Activated naive CD8-positive, alpha-beta T cell treated with anti-CD3 and anti-CD28 coated beads, Interleukin-2, amount 10 ng/mL, durations not matched to agents 7 days and 5 days (primary cell): ENCODE measurements at regions of chr1 and their contacts with region 1.

Region 1: GRCh38 chr1:226332947-226333346 is 24.0 kb upstream of the LIN9 start:
- DNase-seq: no peak
- ATAC-seq: no peak
- H3K4me3 Mint-ChIP-seq: peak overlapping the region; percentile 54
- H3K27ac Mint-ChIP-seq: peak overlapping the region; percentile 56
- H3K4me1 Mint-ChIP-seq: peaks cover 8% of the 10 kb centered on the region
- H3K27me3 Mint-ChIP-seq: peaks cover 4% of the 10 kb centered on the region

Region 2: DNA sequence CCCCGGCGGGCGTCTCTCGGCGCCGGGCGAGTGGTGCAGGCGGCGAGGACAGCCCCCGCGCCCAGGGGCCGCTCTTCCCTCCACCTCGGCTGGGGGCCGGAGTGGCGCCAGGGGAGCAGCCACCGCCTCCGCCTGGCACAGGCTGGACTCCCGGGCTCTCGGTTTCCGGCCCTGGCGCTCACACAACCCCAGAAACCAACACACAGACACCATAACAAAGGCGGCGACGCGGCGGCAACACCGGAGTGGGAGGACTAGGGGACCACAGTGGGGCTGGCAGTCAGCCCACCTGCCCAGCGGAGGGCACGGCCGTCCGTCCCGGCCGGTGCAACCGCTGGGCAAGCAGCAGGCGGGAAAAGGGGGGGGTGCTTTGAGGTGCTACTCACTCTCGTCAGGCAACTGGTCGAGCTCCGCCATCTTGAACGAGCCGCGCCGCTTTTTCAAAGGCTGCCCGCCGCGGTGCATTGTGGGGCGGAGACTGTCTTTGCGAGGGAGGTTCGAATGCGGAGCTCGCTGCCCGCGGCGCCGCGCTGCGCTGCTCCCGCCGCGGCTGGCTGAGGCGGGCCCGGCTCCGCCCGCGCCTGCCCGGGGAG is 24.1 kb before region 1 on chr1 and contains the start of gene LIN9:
- POLR2A ChIA-PET with region 1: interaction called, 11 read pairs
- DNase-seq: peak; percentile 96
- ATAC-seq: peak; percentile 87
- H3K4me3 Mint-ChIP-seq: peak within 1 kb of the TSS; percentile 90
- H3K27ac Mint-ChIP-seq: peak within 1 kb of the TSS; percentile 92
- H3K4me1 Mint-ChIP-seq: peaks cover 21% of the 10 kb centered on the region
- H3K27me3 Mint-ChIP-seq: peaks cover 18% of the 10 kb centered on the region
- total RNA-seq, gene LIN9: 11.0 to 11.1 TPM

Region 3: GRCh38 chr1:226320930-226321329 is 12.0 kb before region 1 on chr1:
- POLR2A ChIA-PET with region 1: no interaction called
- DNase-seq: no peak
- ATAC-seq: no peak
- H3K4me3 Mint-ChIP-seq: no peak overlapping the region
- H3K27ac Mint-ChIP-seq: no peak overlapping the region
- H3K4me1 Mint-ChIP-seq: no peaks in the 10 kb centered on the region
- H3K27me3 Mint-ChIP-seq: peaks cover 19% of the 10 kb centered on the region